Esophagus muscularis mucosa (tissue), 4 donors: ENCODE measurements at regions of chr14 and their contacts with region 1.

Region 1: GRCh38 chr14:71138448-71139293 is 231.4 kb downstream of the PCNX1 start:
- DNase-seq: peak; percentile 62
- H3K4me3 ChIP-seq: peak overlapping the region in 1 of 4 donors; percentile 17
- H3K27ac ChIP-seq: no peak overlapping the region
- H3K4me1 ChIP-seq: peaks cover 0 to 6% (median 3%) of the 10 kb centered on the region in 4 donors
- H3K27me3 ChIP-seq: no peaks in the 10 kb centered on the region
- CTCF ChIP-seq: peak; percentile 86 to 97 (median 90)
- EP300 ChIP-seq: no peak
- POLR2A ChIP-seq: no peak

Region 2: DNA sequence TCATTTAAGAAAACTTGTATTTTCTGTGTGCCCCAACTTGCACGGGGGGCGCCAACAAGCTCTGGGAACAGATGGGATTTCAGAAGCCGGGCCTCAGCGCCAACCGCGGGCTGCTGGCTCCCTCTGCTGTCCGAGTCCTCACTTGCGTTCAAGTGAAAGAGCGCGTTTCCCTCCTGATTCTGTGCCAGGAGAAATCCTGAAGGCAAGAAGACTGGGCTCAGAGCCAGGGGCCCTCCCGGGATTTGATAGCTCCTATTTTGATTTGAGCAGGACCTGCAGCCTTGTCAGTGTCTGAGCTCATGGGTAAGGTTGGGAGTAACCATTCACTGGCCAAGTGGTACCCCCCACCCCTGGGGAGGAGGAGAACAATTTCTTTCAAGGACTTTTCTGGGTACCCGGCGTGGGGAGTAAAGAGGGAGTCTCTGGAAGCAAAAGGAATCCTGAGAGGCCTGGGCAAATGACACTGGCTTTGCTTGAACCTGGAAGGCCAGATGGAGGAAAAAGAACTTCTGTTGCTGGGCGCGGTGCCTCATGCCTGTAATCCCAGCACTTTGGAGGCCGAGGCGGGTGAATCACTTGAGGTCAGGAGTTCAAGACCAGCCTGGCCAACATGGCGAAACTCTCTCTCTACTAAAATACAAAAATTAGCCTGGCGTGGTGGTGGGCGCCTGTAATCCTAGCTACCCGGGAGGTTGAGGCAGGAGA is 614.6 kb after region 1 on chr14:
- intact Hi-C with region 1: loop called (anchors 1 kb)
- DNase-seq: peak; percentile 94
- H3K4me3 ChIP-seq: peak overlapping the region in 3 of 4 donors; percentile 14 to 41 (median 18)
- H3K27ac ChIP-seq: no peak overlapping the region
- H3K4me1 ChIP-seq: peaks cover 10 to 17% (median 14%) of the 10 kb centered on the region in 4 donors
- H3K27me3 ChIP-seq: no peaks in the 10 kb centered on the region
- CTCF ChIP-seq: peak; percentile 86 to 91 (median 87)
- EP300 ChIP-seq: no peak
- POLR2A ChIP-seq: no peak

Region 3: GRCh38 chr14:71855399-71856036 is 716.8 kb after region 1 on chr14:
- intact Hi-C with region 1: loop called (anchors 5 kb)
- DNase-seq: no peak
- H3K4me3 ChIP-seq: no peak overlapping the region
- H3K27ac ChIP-seq: no peak overlapping the region
- H3K4me1 ChIP-seq: peaks cover 0 to 5% (median 0%) of the 10 kb centered on the region in 4 donors
- H3K27me3 ChIP-seq: no peaks in the 10 kb centered on the region
- CTCF ChIP-seq: peak; percentile 34 to 55 (median 43)
- EP300 ChIP-seq: no peak
- POLR2A ChIP-seq: no peak